Activated naive CD8-positive, alpha-beta T cell treated with anti-CD3 and anti-CD28 coated beads, Interleukin-2, amount 10 ng/mL, durations not matched to agents 7 days and 5 days (primary cell): ENCODE measurements at regions of chr11 and their contacts with region 1.

Region 1: GRCh38 chr11:18395735-18396504 is 1.6 kb downstream of the LDHA start:
- DNase-seq: peak; percentile 98
- ATAC-seq: peak; percentile 63
- H3K4me3 Mint-ChIP-seq: peak overlapping the region; percentile 97
- H3K27ac Mint-ChIP-seq: peak overlapping the region; percentile 96
- H3K4me1 Mint-ChIP-seq: peaks cover 36% of the 10 kb centered on the region
- H3K27me3 Mint-ChIP-seq: no peaks in the 10 kb centered on the region

Region 2: GRCh38 chr11:18383388-18384156 is 12.3 kb before region 1 on chr11:
- POLR2A ChIA-PET with region 1: interaction called, 221 read pairs
- DNase-seq: peak; percentile 72
- ATAC-seq: peak; percentile 77
- H3K4me3 Mint-ChIP-seq: peak overlapping the region; percentile 73
- H3K27ac Mint-ChIP-seq: peak overlapping the region; percentile 97
- H3K4me1 Mint-ChIP-seq: peaks cover 35% of the 10 kb centered on the region
- H3K27me3 Mint-ChIP-seq: no peaks in the 10 kb centered on the region

Region 3: DNA sequence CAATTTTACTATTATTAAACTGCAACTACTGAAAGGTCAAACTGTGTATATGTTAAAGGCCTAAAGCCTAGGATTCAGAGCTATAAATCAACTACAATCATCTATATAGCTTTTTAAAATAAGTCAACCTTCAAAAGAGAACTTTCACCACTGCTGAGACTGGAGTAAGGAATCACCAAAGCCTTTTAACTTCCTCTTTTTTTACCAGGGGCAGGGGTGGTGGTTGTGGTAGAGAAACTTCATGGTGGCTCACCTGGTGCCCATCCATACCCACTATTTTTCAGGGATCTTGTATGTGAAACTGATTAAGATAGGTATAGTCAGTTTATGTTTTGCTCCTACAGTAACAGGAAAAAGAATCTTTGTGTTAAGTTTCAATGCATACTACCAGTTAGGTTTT is 99.4 kb after region 1 on chr11:
- POLR2A ChIA-PET with region 1: no interaction called
- DNase-seq: no peak
- ATAC-seq: no peak
- H3K4me3 Mint-ChIP-seq: no peak overlapping the region
- H3K27ac Mint-ChIP-seq: no peak overlapping the region
- H3K4me1 Mint-ChIP-seq: peaks cover 8% of the 10 kb centered on the region
- H3K27me3 Mint-ChIP-seq: no peaks in the 10 kb centered on the region

Region 4: GRCh38 chr11:18526521-18527296 is 130.8 kb after region 1 on chr11 and contains the start of gene TSG101:
- POLR2A ChIA-PET with region 1: interaction called, 27 read pairs
- DNase-seq: peak; percentile 93
- ATAC-seq: peak; percentile 91
- H3K4me3 Mint-ChIP-seq: peak within 1 kb of the TSS; percentile 99
- H3K27ac Mint-ChIP-seq: peak within 1 kb of the TSS; percentile 100
- H3K4me1 Mint-ChIP-seq: peaks cover 24% of the 10 kb centered on the region
- H3K27me3 Mint-ChIP-seq: no peaks in the 10 kb centered on the region
- total RNA-seq, gene TSG101: 35.2 to 35.5 TPM